Heart right ventricle (tissue), 16 donors: ENCODE measurements at regions of chr6 and their contacts with region 1.

Region 1: DNA sequence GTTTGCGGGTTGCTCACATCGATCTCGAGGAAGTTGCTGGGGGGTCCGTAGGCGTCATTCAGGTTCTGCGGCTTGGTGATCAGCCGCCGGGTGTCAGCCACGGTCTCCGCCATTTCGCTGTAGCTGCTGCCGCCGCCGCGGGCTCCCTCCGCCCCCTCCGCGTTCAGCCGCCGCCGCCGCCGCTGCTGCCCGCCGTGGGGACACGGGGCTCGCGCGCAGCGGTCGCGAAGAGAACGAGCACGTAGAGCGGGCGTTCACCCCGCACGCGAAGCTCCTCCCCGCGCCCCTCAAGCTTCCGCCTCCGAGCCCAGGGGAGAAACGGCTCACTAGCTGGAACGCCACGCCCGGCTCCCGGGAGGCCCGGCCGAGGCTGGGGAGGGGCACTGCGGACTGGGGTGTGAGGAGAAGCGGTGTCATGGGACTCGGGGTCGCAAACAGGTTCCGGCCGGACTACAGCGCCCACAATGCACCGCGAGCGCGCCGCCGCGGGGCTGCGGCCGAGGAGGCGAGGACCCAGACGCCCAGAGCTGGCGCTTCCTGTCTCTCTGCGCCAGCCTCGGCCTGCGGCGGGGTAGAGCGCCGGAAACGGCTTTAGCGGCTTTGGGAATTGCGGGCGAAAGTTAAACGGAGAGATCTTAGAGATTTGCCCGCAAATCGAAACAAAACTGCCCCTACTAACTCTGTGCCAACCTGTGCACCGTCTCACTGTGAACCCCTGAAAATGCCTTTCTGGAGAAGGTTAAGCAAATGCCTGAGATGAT is at the start of gene SNX3:
- DNase-seq: peak; percentile 95 to 96
- ATAC-seq: peak; percentile 96 to 99 (median 98)
- H3K4me3 ChIP-seq: peak within 1 kb of the TSS; percentile 77 to 99 (median 90)
- H3K27ac ChIP-seq: peak within 1 kb of the TSS; percentile 81 to 99 (median 96)
- H3K4me1 ChIP-seq: peaks cover 0 to 47% (median 34%) of the 10 kb centered on the region in 9 donors
- H3K27me3 ChIP-seq: no peaks in the 10 kb centered on the region
- CTCF ChIP-seq: peak in 4 of 9 donors; percentile 8 to 21 (median 20)
- total RNA-seq, gene SNX3: 215 to 269 (median 235) TPM

Region 2: GRCh38 chr6:108074359-108075144 is 186.4 kb before region 1 on chr6 and contains the start of gene OSTM1:
- intact Hi-C with region 1: loop called in 1 of 10 experiments (anchors 10 kb)
- DNase-seq: peak; percentile 91 to 94
- ATAC-seq: peak; percentile 98 to 100 (median 100)
- H3K4me3 ChIP-seq: peak within 1 kb of the TSS; percentile 76 to 100 (median 98)
- H3K27ac ChIP-seq: peak within 1 kb of the TSS; percentile 23 to 95 (median 86)
- H3K4me1 ChIP-seq: peaks cover 0 to 24% (median 18%) of the 10 kb centered on the region in 9 donors
- H3K27me3 ChIP-seq: no peaks in the 10 kb centered on the region
- CTCF ChIP-seq: peak in 2 of 9 donors; percentile 5 to 21
- total RNA-seq, gene OSTM1: 34.5 to 57.9 (median 42.3) TPM

Region 3: GRCh38 chr6:108113557-108114519 is 147.2 kb before region 1 on chr6:
- intact Hi-C with region 1: loop called in 1 of 10 experiments (anchors 2 kb)
- DNase-seq: peak in 1 of 2 donors; percentile 39
- ATAC-seq: peak in 7 of 8 donors; percentile 30 to 55 (median 46)
- H3K4me3 ChIP-seq: peak overlapping the region in 6 of 10 donors; percentile 13 to 57 (median 48)
- H3K27ac ChIP-seq: no peak overlapping the region
- H3K4me1 ChIP-seq: peaks cover 12 to 47% (median 41%) of the 10 kb centered on the region in 9 donors
- H3K27me3 ChIP-seq: peaks cover 16 to 98% (median 90%) of the 10 kb centered on the region in 7 donors
- CTCF ChIP-seq: peak in 8 of 9 donors; percentile 29 to 66 (median 54)

Region 4: GRCh38 chr6:108294727-108295625 is 34.0 kb after region 1 on chr6 and contains the start of gene AFG1L:
- intact Hi-C with region 1: loop called in 6 of 10 experiments (anchors 1 to 5 kb)
- DNase-seq: peak; percentile 94 to 95
- ATAC-seq: peak; percentile 99 to 100 (median 99)
- H3K4me3 ChIP-seq: peak within 1 kb of the TSS; percentile 62 to 96 (median 78)
- H3K27ac ChIP-seq: peak within 1 kb of the TSS; percentile 91 to 99 (median 95)
- H3K4me1 ChIP-seq: peaks cover 0 to 18% (median 10%) of the 10 kb centered on the region in 9 donors
- H3K27me3 ChIP-seq: no peaks in the 10 kb centered on the region
- CTCF ChIP-seq: no peak
- total RNA-seq, gene AFG1L: 9.2 to 18.8 (median 14.0) TPM

Region 5: GRCh38 chr6:108492131-108492766 is 231.3 kb after region 1 on chr6:
- intact Hi-C with region 1: loop called in 2 of 10 experiments (anchors 10 kb)
- DNase-seq: peak in 1 of 2 donors; percentile 6
- ATAC-seq: peak in 3 of 8 donors; percentile 35 to 72 (median 67)
- H3K4me3 ChIP-seq: no peak overlapping the region
- H3K27ac ChIP-seq: no peak overlapping the region
- H3K4me1 ChIP-seq: peaks cover 0 to 7% (median 0%) of the 10 kb centered on the region in 9 donors
- H3K27me3 ChIP-seq: no peaks in the 10 kb centered on the region
- CTCF ChIP-seq: peak; percentile 20 to 85 (median 66)

Region 6: GRCh38 chr6:108565893-108566292 is 304.9 kb after region 1 on chr6:
- intact Hi-C with region 1: no loop called
- DNase-seq: peak in 1 of 2 donors; percentile 57
- ATAC-seq: peak in 7 of 8 donors; percentile 16 to 63 (median 47)
- H3K4me3 ChIP-seq: peak overlapping the region in 5 of 10 donors; percentile 13 to 93 (median 75)
- H3K27ac ChIP-seq: peak overlapping the region; percentile 14 to 100 (median 96)
- H3K4me1 ChIP-seq: peaks cover 12 to 85% (median 66%) of the 10 kb centered on the region in 9 donors
- H3K27me3 ChIP-seq: no peaks in the 10 kb centered on the region
- CTCF ChIP-seq: peak in 4 of 9 donors; percentile 22 to 48 (median 42)